H1 (cell line): ENCODE measurements at regions of chr11 and their contacts with region 1.

Region 1: GRCh38 chr11:7154881-7155361 is 66.1 kb downstream of the RBMXL2 start:
- DNase-seq: no peak
- H3K4me3 ChIP-seq: no peak overlapping the region
- H3K27ac ChIP-seq: no peak overlapping the region
- H3K4me1 ChIP-seq: no peaks in the 10 kb centered on the region
- H3K27me3 ChIP-seq: no peaks in the 10 kb centered on the region
- CTCF ChIP-seq: no peak
- EP300 ChIP-seq: no peak
- POLR2A ChIP-seq: no peak
- RAD21 ChIP-seq: no peak

Region 2: DNA sequence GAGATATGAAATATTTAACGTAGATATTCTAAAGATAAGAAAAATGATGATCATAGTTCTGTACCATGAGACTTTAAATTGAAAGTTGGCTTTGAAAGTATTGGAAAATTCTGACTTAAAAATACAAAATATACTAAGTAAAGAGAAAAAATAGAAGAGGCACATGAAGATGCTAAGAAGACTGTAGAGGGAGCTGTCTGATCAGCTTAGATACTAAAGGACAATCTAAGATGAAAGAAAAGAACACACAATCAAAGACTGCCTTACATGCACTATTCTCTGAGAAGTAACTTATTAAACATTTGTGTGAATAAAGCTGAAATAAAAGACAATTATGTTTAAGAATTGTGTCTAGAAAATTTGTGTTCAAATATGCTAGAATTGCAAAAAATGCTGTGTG is 11.0 kb before region 1 on chr11:
- CTCF ChIA-PET with region 1: interaction called, 17 read pairs
- POLR2A ChIA-PET with region 1: no interaction called
- DNase-seq: no peak
- H3K4me3 ChIP-seq: no peak overlapping the region
- H3K27ac ChIP-seq: no peak overlapping the region
- H3K4me1 ChIP-seq: no peaks in the 10 kb centered on the region
- H3K27me3 ChIP-seq: no peaks in the 10 kb centered on the region
- CTCF ChIP-seq: peak in 2 of 3 experiments; percentile 28 to 38; a peak in 2 of 4 replicates
- EP300 ChIP-seq: no peak
- POLR2A ChIP-seq: no peak
- RAD21 ChIP-seq: peak; percentile 65 to 78

Region 3: DNA sequence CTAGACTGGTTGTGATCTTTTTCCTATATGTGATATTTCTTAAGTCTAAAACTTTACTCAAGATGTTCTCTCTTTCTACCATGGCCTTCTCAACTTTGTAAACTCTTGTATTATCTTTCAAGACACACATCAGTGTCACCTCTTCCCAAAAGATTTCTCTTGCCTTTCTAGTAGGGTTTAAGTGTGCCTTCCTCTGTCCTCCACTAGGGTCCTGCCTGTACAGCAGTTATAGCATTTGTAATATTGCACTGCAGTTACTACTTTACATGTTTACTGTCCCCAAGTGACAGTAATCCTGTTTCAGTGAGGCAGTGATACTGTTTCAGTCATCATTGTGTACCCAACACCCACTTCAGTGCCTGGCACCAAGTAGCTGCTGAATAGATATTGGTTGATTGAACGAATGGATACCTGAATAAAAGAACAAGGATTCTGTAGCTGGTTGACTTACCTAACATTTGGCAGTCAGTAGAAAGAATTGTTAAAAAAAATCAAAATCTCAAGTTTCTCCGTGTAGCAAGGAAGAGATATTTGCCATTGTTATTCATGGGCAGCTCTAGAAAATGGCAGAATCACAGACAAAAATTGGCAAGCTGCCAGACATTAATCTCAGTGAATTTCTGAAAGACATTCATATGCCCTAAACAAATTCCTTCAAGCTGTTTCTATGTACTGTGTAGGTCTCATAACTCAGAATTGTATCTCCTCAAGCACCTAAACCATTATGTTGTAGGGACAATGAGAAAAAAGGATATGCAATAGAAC is 13.2 kb after region 1 on chr11:
- CTCF ChIA-PET with region 1: interaction called, 11 read pairs
- POLR2A ChIA-PET with region 1: no interaction called
- DNase-seq: no peak
- H3K4me3 ChIP-seq: no peak overlapping the region
- H3K27ac ChIP-seq: no peak overlapping the region
- H3K4me1 ChIP-seq: no peaks in the 10 kb centered on the region
- H3K27me3 ChIP-seq: no peaks in the 10 kb centered on the region
- CTCF ChIP-seq: peak in 1 of 3 experiments; percentile 42; a peak in 1 of 4 replicates
- EP300 ChIP-seq: no peak
- POLR2A ChIP-seq: no peak
- RAD21 ChIP-seq: no peak

Region 4: DNA sequence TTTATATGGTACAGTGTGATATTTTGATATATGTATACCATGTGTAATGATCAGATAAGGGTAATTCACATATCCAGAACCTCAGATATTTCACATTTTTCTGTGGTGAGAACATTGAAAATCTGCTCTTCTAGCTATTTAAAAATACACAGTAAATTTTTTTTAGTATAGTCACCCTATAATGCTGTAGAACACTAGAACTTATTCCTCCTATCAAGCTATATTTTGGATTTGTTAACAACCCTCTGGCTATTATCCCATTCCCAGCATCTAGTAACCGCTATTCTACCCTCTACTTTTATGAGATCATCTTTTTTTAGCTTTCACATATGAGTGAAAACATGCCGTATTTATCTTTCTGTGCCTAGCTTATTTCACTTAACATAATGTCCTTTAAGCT is 31.3 kb after region 1 on chr11:
- CTCF ChIA-PET with region 1: no interaction called
- POLR2A ChIA-PET with region 1: no interaction called
- DNase-seq: no peak
- H3K4me3 ChIP-seq: no peak overlapping the region
- H3K27ac ChIP-seq: no peak overlapping the region
- H3K4me1 ChIP-seq: no peaks in the 10 kb centered on the region
- H3K27me3 ChIP-seq: no peaks in the 10 kb centered on the region
- CTCF ChIP-seq: no peak
- EP300 ChIP-seq: no peak
- POLR2A ChIP-seq: no peak
- RAD21 ChIP-seq: no peak